ENCODE measurements at regions of chr10 and their contacts with region 1.

Region 1: GRCh38 chr10:28532383-28533175 is at the start of gene WAC:
- DNase-seq: peak; percentile 72
- ATAC-seq: peak; percentile 88
- H3K4me3 ChIP-seq: peak within 1 kb of the TSS; percentile 92
- H3K27ac ChIP-seq: peak within 1 kb of the TSS; percentile 100
- H3K4me1 ChIP-seq: peaks cover 4% of the 10 kb centered on the region
- H3K27me3 ChIP-seq: no peaks in the 10 kb centered on the region
- CTCF ChIP-seq: no peak
- EP300 ChIP-seq: 0 out of 4 replicates have a peak, but pooled peaks of 1 of the 2 experiments have one; percentile 16
- POLR2A ChIP-seq: peak; percentile 98
- RAD21 ChIP-seq: no peak
- polyA plus RNA-seq, gene WAC: 26.5 to 30.4 TPM

Region 2: GRCh38 chr10:27536437-27536836 is 996.1 kb before region 1 on chr10:
- CTCF ChIA-PET with region 1: no interaction called
- POLR2A ChIA-PET with region 1: no interaction called
- RAD21 ChIA-PET with region 1: no interaction called
- SMC1A ChIA-PET with region 1: no interaction called
- in situ Hi-C with region 1: no loop called
- intact Hi-C with region 1: loop called (anchors 10 kb)
- DNase-seq: no peak
- ATAC-seq: peak; percentile 72
- H3K4me3 ChIP-seq: no peak overlapping the region
- H3K27ac ChIP-seq: peak overlapping the region; percentile 20
- H3K4me1 ChIP-seq: no peaks in the 10 kb centered on the region; the same call in 1 of the 2 replicates
- H3K27me3 ChIP-seq: no peaks in the 10 kb centered on the region
- CTCF ChIP-seq: no peak
- EP300 ChIP-seq: no peak
- POLR2A ChIP-seq: no peak
- RAD21 ChIP-seq: no peak

Region 3: DNA sequence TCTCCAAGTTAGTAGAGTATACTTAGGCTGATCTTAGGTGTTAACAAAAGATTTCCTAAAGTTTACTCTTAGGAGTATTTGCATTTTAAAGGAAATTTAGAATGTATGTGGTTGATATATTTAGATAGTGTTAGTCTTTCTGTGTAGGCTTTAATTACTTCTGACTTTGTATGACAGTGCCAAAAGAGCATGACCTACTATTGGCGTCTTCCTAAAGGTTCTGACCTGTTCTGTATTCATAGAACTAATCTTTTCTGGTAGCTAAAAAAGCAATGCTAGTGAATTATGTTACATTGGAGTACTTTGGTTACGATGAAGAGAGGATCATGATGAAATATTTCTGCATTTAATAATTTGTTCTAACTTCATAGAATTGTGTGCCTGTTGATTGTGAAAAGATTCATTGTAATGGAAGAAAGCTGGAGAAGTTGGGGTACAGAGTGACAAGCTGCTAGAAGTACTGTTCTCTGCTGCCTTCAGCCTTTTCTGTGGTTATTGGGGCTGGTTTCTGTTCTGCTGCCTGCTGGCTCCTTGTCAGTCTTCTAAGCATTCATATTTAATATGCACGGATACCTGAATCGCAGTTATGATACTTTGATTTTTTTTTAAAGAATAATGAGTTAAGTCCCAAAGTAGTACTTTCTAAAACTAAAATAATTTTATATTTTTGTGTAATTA is 13.5 kb after region 1 on chr10:
- CTCF ChIA-PET with region 1: interaction called, 6 read pairs
- POLR2A ChIA-PET with region 1: interaction called, 11 read pairs
- RAD21 ChIA-PET with region 1: interaction called, 5 read pairs
- SMC1A ChIA-PET with region 1: interaction called, 17 read pairs
- in situ Hi-C with region 1: no loop called
- intact Hi-C with region 1: no loop called
- DNase-seq: no peak
- ATAC-seq: peak; percentile 74
- H3K4me3 ChIP-seq: no peak overlapping the region
- H3K27ac ChIP-seq: 0 out of 2 replicates have a peak overlapping the region, but pooled peaks have one; percentile 9
- H3K4me1 ChIP-seq: peaks cover 16% of the 10 kb centered on the region
- H3K27me3 ChIP-seq: no peaks in the 10 kb centered on the region
- CTCF ChIP-seq: no peak
- EP300 ChIP-seq: no peak
- POLR2A ChIP-seq: no peak
- RAD21 ChIP-seq: no peak

Measured in GM12878 (cell line).